Panc1 (cell line): ENCODE measurements at regions of chr6 and their contacts with region 1.

Region 1: DNA sequence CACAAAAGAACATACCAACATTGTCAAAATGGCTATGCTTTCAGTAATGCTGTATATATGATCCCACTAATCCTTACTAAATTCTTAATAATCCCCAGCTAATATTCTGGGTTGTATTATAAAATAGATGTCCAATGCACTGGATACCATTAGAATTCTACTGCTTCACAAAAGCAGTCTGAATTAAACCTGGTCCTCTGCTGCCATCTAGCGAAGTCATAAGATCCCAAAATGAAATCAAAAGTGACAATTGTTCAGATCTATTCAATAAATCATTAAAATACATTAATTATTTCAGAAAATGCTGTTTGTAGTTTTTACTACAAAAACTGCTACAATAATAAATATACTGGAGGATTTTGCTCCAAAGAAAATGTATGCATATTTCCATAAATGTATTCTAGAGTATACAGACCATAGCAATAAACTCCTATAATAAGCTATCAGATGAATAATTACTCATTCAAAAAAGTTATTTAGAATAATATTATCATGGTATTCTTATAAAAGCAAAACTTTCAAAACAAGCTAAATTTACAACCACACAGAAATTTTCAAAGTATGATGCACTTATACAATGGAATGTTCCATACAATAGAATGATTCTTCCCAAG is 92.6 kb downstream of the RNGTT start:
- DNase-seq: no peak
- ATAC-seq: no peak
- H3K4me3 ChIP-seq: no peak overlapping the region
- H3K27ac ChIP-seq: no peak overlapping the region
- H3K4me1 ChIP-seq: no peaks in the 10 kb centered on the region
- H3K27me3 ChIP-seq: no peaks in the 10 kb centered on the region
- CTCF ChIP-seq: peak; percentile 68; the same call in 1 of the 2 replicates

Region 2: GRCh38 chr6:88855541-88856147 is 15.2 kb before region 1 on chr6:
- CTCF ChIA-PET with region 1: no interaction called
- POLR2A ChIA-PET with region 1: interaction called, 20 read pairs
- in situ Hi-C with region 1: no loop called
- intact Hi-C with region 1: no loop called
- DNase-seq: no peak
- ATAC-seq: no peak
- H3K4me3 ChIP-seq: no peak overlapping the region
- H3K27ac ChIP-seq: no peak overlapping the region
- H3K4me1 ChIP-seq: no peaks in the 10 kb centered on the region
- H3K27me3 ChIP-seq: no peaks in the 10 kb centered on the region
- CTCF ChIP-seq: no peak